ENCODE measurements at regions of chr20 and their contacts with region 1.

Region 1: GRCh38 chr20:48828022-48828743 is 384 bp upstream of the PREX1 start:
- DNase-seq: peak; percentile 82
- ATAC-seq: peak; percentile 50
- H3K4me3 Mint-ChIP-seq: peak overlapping the region; percentile 80
- H3K27ac Mint-ChIP-seq: peak overlapping the region; percentile 83
- H3K4me1 Mint-ChIP-seq: peaks cover 35% of the 10 kb centered on the region
- H3K27me3 Mint-ChIP-seq: no peaks in the 10 kb centered on the region
- CTCF ChIP-seq: no peak

Region 2: DNA sequence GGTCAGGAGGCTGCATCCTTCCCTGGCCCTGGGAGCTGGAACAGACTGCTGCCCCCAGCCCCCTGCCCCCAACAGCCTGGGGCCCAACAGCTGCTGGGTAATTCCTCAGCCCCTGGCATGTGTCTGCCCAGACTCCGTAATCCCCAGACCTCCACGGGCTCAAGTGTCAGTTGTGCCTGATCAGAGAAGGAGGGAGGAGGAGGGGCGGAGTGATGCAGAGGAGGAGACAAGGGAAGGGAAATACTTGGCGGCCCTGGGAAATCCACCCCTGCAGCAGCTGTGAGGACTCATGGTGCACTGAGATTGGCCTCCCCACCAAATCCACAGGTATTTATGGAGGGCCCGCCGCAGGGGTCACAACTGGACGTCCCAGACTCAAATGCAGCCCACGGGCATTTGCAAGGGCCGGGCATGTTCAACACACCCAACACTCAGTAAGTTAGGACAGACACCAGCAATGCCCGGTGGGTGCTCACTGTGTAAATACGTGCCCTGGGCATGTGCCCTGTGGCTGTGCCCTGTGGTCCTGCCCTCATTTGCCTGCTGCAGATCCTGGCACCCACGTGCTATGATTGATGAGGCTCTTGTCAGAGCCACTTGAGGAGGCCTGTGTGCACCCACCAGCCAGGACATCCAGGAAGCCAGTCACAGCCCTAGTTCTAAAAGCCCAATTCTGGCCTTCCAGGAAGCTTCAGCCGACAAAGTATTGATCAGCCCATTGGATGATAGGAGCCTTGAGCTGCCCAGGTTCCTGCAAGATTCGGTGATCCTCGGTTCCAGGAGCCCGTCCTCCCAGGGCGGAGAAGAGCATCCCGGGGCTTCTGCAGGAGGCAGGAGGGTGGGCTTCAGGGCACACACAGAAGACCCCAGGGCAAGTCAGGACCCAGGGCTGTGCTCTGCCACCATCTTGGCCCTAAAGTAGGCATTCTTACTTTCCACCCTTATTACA is 224.5 kb before region 1 on chr20:
- CTCF ChIA-PET with region 1: no interaction called
- POLR2A ChIA-PET with region 1: no interaction called
- intact Hi-C with region 1: no loop called
- DNase-seq: no peak
- ATAC-seq: no peak
- H3K4me3 Mint-ChIP-seq: no peak overlapping the region
- H3K27ac Mint-ChIP-seq: no peak overlapping the region
- H3K4me1 Mint-ChIP-seq: no peaks in the 10 kb centered on the region
- H3K27me3 Mint-ChIP-seq: no peaks in the 10 kb centered on the region
- CTCF ChIP-seq: no peak

Region 3: GRCh38 chr20:48717095-48717672 is 111.0 kb before region 1 on chr20:
- CTCF ChIA-PET with region 1: interaction called, 3 read pairs
- POLR2A ChIA-PET with region 1: interaction called, 4 read pairs
- intact Hi-C with region 1: loop called (anchors 2 kb)
- DNase-seq: peak; percentile 38
- ATAC-seq: peak; percentile 8
- H3K4me3 Mint-ChIP-seq: peak overlapping the region; percentile 20
- H3K27ac Mint-ChIP-seq: peak overlapping the region; percentile 99
- H3K4me1 Mint-ChIP-seq: peaks cover 88% of the 10 kb centered on the region
- H3K27me3 Mint-ChIP-seq: no peaks in the 10 kb centered on the region
- CTCF ChIP-seq: no peak

Region 4: DNA sequence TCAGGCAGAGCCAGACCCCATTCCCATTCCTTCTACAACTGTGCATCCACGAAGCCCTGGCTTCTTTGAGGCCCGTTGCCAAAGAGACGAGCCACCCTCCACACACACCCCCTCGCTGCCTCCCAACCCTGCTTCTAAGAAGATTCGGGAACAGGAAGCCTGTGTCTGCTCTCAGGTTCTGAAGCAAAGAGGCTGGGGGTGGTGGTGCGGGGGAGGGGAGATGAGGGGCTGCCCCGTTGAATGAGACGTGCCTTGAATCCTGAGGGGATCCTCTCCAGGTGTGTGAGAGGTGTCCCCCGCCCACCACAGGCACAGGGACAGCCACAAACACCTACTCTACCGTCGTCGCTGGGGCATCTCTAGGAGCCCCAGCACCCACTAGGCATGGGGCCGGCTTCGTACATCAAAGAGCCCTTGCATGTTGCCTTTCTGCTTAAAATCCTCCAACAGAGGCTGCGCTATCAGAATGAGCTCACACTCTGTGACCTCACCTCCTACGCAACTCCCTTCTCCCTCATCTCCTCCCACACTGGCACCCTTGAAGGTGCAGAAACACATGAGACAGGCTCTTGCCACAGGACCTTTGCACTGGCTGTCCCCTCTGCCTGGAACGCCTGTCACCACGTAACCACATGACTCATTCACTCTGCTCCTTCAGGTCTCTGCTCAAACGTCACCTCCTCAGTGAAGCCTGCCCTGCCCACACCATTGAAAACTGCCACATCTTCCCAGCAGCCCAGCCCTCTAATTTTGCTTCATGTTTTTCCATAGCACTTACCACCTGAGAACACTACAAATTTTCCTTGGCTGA is 58.9 kb before region 1 on chr20:
- CTCF ChIA-PET with region 1: interaction called, 7 read pairs
- POLR2A ChIA-PET with region 1: interaction called, 18 read pairs
- intact Hi-C with region 1: loop called (anchors 2 kb)
- DNase-seq: peak; percentile 100
- ATAC-seq: peak; percentile 81
- H3K4me3 Mint-ChIP-seq: peak overlapping the region; percentile 55
- H3K27ac Mint-ChIP-seq: peak overlapping the region; percentile 84
- H3K4me1 Mint-ChIP-seq: peaks cover 86% of the 10 kb centered on the region
- H3K27me3 Mint-ChIP-seq: no peaks in the 10 kb centered on the region
- CTCF ChIP-seq: no peak

Region 5: GRCh38 chr20:48787861-48788375 is 40.3 kb before region 1 on chr20:
- CTCF ChIA-PET with region 1: interaction called, 3 read pairs
- POLR2A ChIA-PET with region 1: interaction called, 15 read pairs
- intact Hi-C with region 1: loop called (anchors 5 kb)
- DNase-seq: no peak
- ATAC-seq: peak; percentile 18
- H3K4me3 Mint-ChIP-seq: no peak overlapping the region
- H3K27ac Mint-ChIP-seq: peak overlapping the region; percentile 66
- H3K4me1 Mint-ChIP-seq: peaks cover 54% of the 10 kb centered on the region
- H3K27me3 Mint-ChIP-seq: no peaks in the 10 kb centered on the region
- CTCF ChIP-seq: no peak

Region 6: DNA sequence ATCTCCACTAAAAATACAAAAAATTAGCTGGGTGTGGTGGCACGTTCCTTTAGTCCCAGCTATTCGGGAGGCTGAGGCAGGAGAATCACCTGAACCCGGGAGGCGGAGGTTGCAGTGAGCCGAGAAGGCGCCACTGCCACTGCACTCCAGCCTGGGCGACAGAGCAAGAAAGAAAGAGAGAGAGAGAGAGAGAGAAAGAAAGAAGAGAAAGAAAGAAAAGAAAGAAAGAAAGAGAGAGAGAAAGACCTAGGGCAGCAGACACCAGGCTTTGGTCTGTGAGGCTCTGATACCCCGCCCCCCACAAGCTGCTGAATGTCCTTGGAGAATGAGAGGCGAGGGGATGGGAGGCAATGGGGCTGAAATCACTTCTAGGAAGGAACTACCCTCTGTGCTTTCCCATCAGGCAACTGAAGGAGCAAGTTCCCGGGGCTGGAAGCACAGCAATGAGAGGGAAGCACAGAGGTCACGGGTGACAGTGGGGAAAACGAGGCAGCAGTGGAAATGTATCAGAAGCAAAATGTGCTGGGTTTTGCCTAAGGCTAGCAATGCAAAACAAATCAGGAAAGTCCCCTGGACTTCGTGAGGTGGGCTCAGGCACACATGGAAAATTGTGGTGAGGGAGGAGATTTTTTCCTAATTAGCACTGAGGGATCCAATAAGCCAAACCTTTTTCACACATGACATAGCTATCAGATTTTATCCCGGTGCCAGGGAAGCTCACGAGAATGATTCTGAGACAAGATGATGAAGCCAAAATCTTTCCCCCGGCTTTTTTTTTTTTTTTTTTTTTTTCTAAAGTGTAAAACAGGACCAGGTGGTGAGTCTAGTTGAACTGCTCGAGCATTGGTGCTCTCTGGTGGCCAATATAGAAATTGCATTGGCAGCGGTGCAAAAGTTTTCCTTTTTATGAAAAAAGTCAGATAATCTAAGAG is 76.4 kb after region 1 on chr20:
- CTCF ChIA-PET with region 1: interaction called, 12 read pairs
- POLR2A ChIA-PET with region 1: no interaction called
- intact Hi-C with region 1: no loop called
- DNase-seq: peak; percentile 87
- ATAC-seq: peak; percentile 87
- H3K4me3 Mint-ChIP-seq: no peak overlapping the region
- H3K27ac Mint-ChIP-seq: no peak overlapping the region
- H3K4me1 Mint-ChIP-seq: peaks cover 9% of the 10 kb centered on the region
- H3K27me3 Mint-ChIP-seq: peaks cover 2% of the 10 kb centered on the region
- CTCF ChIP-seq: peak; percentile 96